H1 (cell line): ENCODE measurements at regions of chr17 and their contacts with region 1.

Region 1: GRCh38 chr17:42120770-42121769 is at the start of gene KAT2A:
- DNase-seq: peak; percentile 43 to 86
- H3K4me3 ChIP-seq: peak within 1 kb of the TSS; percentile 38 to 84 (median 60)
- H3K27ac ChIP-seq: no peak within 1 kb of the TSS; the same call in 1 of the 2 replicates
- H3K4me1 ChIP-seq: peaks cover 0 to 17% (median 13%) of the 10 kb centered on the region in 4 experiments; a peak in 6 of 7 replicates
- H3K27me3 ChIP-seq: no peaks in the 10 kb centered on the region; a peak in 2 of 7 replicates
- CTCF ChIP-seq: no peak
- EP300 ChIP-seq: no peak
- POLR2A ChIP-seq: peak in 1 of 2 experiments; percentile 81; a peak in 2 of 3 replicates
- RAD21 ChIP-seq: no peak
- total RNA-seq, gene KAT2A: 32.5 and 34.2 TPM in 2 replicates

Region 2: DNA sequence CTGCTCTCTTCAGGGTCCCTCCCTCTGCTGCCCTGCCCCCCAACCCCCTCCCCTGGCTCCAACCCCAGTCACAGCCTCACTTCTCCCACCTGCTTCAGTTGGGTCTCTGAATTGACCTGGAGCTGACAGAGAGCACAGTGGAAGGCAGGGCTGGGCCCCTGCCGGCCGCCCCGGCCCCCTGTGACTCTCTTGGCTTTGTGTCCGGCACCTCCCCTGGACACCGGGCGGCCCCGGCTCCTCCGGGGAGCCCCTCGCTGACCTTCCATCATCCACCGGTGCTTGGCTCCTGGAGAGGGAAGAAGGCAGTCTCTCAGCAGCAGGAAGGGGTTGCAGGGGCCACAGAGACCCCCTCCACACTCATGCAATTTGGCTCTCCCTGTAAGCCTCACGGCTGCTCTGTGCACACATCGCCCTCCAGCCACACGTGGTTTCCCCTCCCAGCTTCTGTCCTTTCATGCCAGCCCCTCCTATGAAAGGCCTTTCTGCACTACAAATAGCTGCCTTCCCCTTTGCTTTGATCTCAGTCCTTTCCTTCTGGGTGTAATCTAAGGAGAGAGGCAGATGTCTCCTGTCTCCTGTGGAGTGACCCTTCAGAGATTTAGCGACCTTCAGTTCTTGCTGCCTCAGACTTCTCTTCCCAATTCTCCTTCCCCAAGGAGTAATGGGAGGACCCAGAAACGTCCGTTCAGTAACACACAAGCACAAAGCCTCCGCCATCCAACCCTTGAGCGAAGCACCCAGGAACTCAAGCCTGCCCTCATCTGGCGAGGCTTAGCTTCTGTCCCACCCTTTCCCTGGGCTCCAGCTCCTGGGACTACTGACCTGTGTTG is 92.9 kb before region 1 on chr17:
- CTCF ChIA-PET with region 1: interaction called, 1,084 read pairs
- POLR2A ChIA-PET with region 1: interaction called, 22 read pairs
- DNase-seq: peak in 1 of 2 experiments; percentile 77
- H3K4me3 ChIP-seq: no peak overlapping the region
- H3K27ac ChIP-seq: no peak overlapping the region
- H3K4me1 ChIP-seq: peaks cover 0 to 12% (median 5%) of the 10 kb centered on the region in 4 experiments; a peak in 4 of 7 replicates
- H3K27me3 ChIP-seq: no peaks in the 10 kb centered on the region
- CTCF ChIP-seq: peak; percentile 65 to 91 (median 80)
- EP300 ChIP-seq: no peak
- POLR2A ChIP-seq: no peak
- RAD21 ChIP-seq: peak; percentile 35 to 58

Region 3: DNA sequence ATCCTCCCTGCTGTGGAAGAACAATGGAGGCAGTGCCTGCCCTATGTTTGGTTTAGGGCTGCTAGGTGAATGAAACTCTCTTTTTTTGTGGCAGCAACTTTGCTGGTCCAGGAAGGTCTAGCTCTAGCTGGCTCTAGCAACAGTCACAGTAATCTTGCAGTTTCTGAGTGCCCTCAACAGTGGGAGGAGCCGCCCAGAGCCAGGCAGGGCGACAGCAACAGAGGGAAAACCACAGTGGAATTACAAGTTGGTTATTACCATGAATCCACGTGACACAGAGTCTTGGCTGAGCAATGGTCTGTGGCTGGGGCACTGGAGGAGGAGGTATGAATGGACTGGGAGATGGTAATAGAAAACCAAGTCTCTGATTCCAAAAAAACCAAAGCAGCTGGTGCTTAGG is 11.9 kb after region 1 on chr17:
- CTCF ChIA-PET with region 1: interaction called, 97 read pairs
- POLR2A ChIA-PET with region 1: interaction called, 7 read pairs
- DNase-seq: no peak
- H3K4me3 ChIP-seq: no peak overlapping the region
- H3K27ac ChIP-seq: no peak overlapping the region
- H3K4me1 ChIP-seq: peaks cover 0 to 6% (median 1%) of the 10 kb centered on the region in 4 experiments; a peak in 3 of 7 replicates
- H3K27me3 ChIP-seq: no peaks in the 10 kb centered on the region
- CTCF ChIP-seq: no peak
- EP300 ChIP-seq: no peak
- POLR2A ChIP-seq: no peak
- RAD21 ChIP-seq: no peak

Region 4: GRCh38 chr17:42163113-42163512 is 42.0 kb after region 1 on chr17:
- CTCF ChIA-PET with region 1: interaction called, 14 read pairs
- POLR2A ChIA-PET with region 1: interaction called, 3 read pairs
- DNase-seq: peak in 1 of 2 experiments; percentile 94
- H3K4me3 ChIP-seq: no peak overlapping the region
- H3K27ac ChIP-seq: no peak overlapping the region
- H3K4me1 ChIP-seq: no peaks in the 10 kb centered on the region; a peak in 2 of 7 replicates
- H3K27me3 ChIP-seq: no peaks in the 10 kb centered on the region
- CTCF ChIP-seq: peak; percentile 84 to 96 (median 95)
- EP300 ChIP-seq: no peak
- POLR2A ChIP-seq: no peak
- RAD21 ChIP-seq: peak; percentile 64 to 73

Region 5: GRCh38 chr17:42180922-42181850 is 60.1 kb after region 1 on chr17 and contains the start of gene KCNH4:
- CTCF ChIA-PET with region 1: interaction called, 27 read pairs
- POLR2A ChIA-PET with region 1: interaction called, 5 read pairs
- DNase-seq: peak in 1 of 2 experiments; percentile 92
- H3K4me3 ChIP-seq: peak within 1 kb of the TSS; percentile 40 to 73 (median 51)
- H3K27ac ChIP-seq: no peak within 1 kb of the TSS
- H3K4me1 ChIP-seq: peaks cover 0 to 17% (median 15%) of the 10 kb centered on the region in 4 experiments; a peak in 5 of 7 replicates
- H3K27me3 ChIP-seq: peaks cover 7 to 57% (median 41%) of the 10 kb centered on the region in 4 experiments
- CTCF ChIP-seq: peak; percentile 45 to 62 (median 45)
- EP300 ChIP-seq: no peak
- POLR2A ChIP-seq: no peak
- RAD21 ChIP-seq: peak; percentile 40 to 53; a peak in 3 of 4 replicates
- total RNA-seq, gene KCNH4: 0.47 and 0.59 TPM in 2 replicates

Region 6: DNA sequence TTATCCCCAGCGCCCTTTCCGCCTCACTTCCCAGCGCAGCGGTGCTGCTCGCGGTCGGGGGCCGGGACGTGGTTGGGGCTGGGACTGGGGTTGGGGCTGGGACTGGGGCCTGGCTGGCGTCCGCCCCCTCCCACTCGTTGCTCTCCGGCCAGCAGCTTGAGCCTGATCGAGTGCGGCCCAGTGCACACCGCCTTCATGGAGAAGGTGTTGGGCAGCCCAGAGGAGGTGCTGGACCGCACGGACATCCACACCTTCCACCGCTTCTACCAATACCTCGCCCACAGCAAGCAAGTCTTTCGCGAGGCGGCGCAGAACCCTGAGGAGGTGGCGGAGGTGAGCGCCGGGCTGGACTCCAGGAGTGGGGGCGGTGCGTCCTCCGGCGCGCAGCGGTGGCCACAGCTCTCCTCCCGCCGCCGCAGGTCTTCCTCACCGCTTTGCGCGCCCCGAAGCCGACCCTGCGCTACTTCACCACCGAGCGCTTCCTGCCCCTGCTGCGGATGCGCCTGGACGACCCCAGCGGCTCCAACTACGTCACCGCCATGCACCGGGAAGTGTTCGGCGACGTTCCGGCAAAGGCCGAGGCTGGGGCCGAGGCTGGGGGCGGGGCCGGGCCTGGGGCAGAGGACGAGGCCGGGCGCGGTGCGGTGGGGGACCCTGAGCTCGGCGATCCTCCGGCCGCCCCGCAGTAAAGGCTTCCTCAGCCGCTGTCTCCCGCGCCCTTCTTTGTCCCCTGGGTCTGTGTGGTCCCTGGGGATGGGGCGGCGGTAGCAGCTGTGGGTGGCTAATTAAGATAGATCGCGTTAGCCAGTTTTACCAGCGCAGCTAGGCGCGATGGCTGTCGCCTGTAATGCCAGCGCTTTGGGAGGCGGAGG is 433.4 kb after region 1 on chr17:
- CTCF ChIA-PET with region 1: no interaction called
- POLR2A ChIA-PET with region 1: no interaction called
- DNase-seq: peak in 1 of 2 experiments; percentile 95
- H3K4me3 ChIP-seq: peak overlapping the region; percentile 61 to 84 (median 71)
- H3K27ac ChIP-seq: peak overlapping the region; percentile 53; the same call in 1 of the 2 replicates
- H3K4me1 ChIP-seq: peaks cover 0 to 9% (median 6%) of the 10 kb centered on the region in 4 experiments; a peak in 6 of 7 replicates
- H3K27me3 ChIP-seq: no peaks in the 10 kb centered on the region; a peak in 1 of 7 replicates
- CTCF ChIP-seq: no peak
- EP300 ChIP-seq: no peak
- POLR2A ChIP-seq: peak in 1 of 2 experiments; percentile 70; a peak in 2 of 3 replicates
- RAD21 ChIP-seq: no peak